ENCODE measurements at regions of chr3 and their contacts with region 1.

Region 1: DNA sequence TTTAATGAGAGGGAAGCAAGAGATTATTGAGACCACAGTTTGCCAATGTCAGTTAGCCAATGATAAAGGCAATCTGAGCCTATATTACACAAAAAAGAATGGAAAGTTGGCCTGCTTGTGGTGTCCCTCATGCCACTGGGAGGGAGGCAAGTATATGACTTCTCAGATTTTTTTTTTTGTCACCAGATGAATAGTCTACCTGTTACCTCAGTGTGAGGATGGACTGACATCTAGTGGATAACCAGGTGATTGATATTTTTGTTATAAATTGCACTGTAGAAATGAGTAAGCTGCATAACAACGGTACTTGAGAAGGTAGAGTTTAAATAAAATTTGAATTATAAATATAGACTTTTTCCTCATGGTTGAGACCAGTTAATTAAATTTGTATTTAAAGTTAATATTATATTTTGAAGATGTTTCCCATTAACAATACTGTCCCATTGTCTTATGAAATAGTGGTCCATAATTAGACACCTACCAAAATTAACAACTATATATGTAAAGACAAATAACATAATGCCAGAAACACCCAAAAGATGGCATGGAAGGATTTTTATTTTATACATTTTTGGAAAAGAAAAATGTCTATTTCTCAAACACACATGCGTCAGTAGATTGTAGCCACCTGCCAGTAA is 237.8 kb upstream of the GADL1 start:
- DNase-seq: no peak
- H3K4me3 ChIP-seq: no peak overlapping the region
- H3K27ac ChIP-seq: no peak overlapping the region
- H3K4me1 ChIP-seq: no peaks in the 10 kb centered on the region
- H3K27me3 ChIP-seq: peaks cover 13% of the 10 kb centered on the region
- CTCF ChIP-seq: peak; percentile 72

Region 2: GRCh38 chr3:30779686-30780287 is 352.5 kb before region 1 on chr3:
- intact Hi-C with region 1: loop called (anchors 10 kb)
- DNase-seq: no peak
- H3K4me3 ChIP-seq: no peak overlapping the region
- H3K27ac ChIP-seq: no peak overlapping the region
- H3K4me1 ChIP-seq: no peaks in the 10 kb centered on the region
- H3K27me3 ChIP-seq: no peaks in the 10 kb centered on the region
- CTCF ChIP-seq: peak; percentile 57

Region 3: DNA sequence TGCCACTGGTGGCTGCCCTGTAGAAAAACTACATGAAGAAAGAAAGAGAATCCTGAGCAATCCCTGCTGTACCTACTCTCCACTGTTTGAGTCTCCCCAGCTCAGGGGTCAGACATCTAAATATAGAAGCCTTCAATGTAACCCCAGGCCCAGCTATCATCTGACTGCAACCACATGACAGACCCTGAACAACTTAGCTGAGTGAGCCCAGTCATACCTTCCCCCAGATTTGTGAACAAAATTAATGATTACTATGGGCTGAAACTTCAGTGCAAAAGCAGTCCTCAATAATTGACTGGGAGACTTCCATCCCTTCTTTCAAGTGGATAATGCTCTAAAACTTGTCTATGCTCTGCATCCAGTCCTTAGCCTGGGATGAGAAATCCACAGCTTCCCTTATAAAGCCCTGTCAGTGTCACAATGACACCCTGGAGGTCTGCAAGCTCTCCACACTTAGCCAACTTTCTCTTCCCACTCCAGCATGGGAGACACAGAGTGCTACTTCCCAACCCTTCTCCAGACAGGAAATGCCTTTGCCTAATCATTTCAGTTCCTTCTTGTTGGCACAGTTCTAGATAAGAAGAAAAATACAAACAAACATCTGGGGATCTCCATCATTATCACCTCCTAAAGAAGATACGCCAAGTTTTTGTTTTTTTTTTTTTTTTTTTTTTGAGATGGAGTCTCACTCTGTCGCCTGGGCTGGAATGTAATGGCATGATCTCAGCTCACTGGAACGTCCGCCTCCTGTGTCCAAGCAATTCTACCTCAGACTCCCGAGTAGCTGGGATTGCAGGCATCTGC is 39.3 kb before region 1 on chr3:
- intact Hi-C with region 1: no loop called
- DNase-seq: no peak
- H3K4me3 ChIP-seq: no peak overlapping the region
- H3K27ac ChIP-seq: peak overlapping the region; percentile 32
- H3K4me1 ChIP-seq: peaks cover 3% of the 10 kb centered on the region
- H3K27me3 ChIP-seq: no peaks in the 10 kb centered on the region
- CTCF ChIP-seq: no peak

Region 4: GRCh38 chr3:31754575-31755278 is 622.5 kb after region 1 on chr3:
- intact Hi-C with region 1: no loop called
- DNase-seq: no peak
- H3K4me3 ChIP-seq: no peak overlapping the region
- H3K27ac ChIP-seq: no peak overlapping the region
- H3K4me1 ChIP-seq: peaks cover 11% of the 10 kb centered on the region
- H3K27me3 ChIP-seq: no peaks in the 10 kb centered on the region
- CTCF ChIP-seq: no peak